A549 (cell line): ENCODE measurements at regions of chr11 and their contacts with region 1.

Region 1: GRCh38 chr11:62591448-62592145 is at the start of gene TUT1:
- DNase-seq: peak; percentile 96 to 100
- ATAC-seq: peak; percentile 89 to 95
- H3K4me3 ChIP-seq: peak within 1 kb of the TSS; percentile 79
- H3K27ac ChIP-seq: peak within 1 kb of the TSS; percentile 90 to 91
- H3K4me1 ChIP-seq: peaks cover 49% of the 10 kb centered on the region
- CTCF ChIP-seq: no peak
- EP300 ChIP-seq: no peak
- POLR2A ChIP-seq: peak; percentile 87
- RAD21 ChIP-seq: no peak; a peak in 1 of 5 replicates
- polyA plus RNA-seq, gene TUT1: 12.9 and 15.5 TPM in 2 replicates

Region 2: GRCh38 chr11:62573592-62574362 is 17.8 kb before region 1 on chr11 and contains the start of gene EEF1G:
- CTCF ChIA-PET with region 1: interaction called, 10 read pairs
- POLR2A ChIA-PET with region 1: interaction called, 93 read pairs
- DNase-seq: peak; percentile 99 to 100
- ATAC-seq: peak; percentile 91 to 96
- H3K4me3 ChIP-seq: peak within 1 kb of the TSS; percentile 97
- H3K27ac ChIP-seq: peak within 1 kb of the TSS; percentile 93 to 94
- H3K4me1 ChIP-seq: peaks cover 41% of the 10 kb centered on the region
- CTCF ChIP-seq: no peak
- EP300 ChIP-seq: no peak
- POLR2A ChIP-seq: peak; percentile 86
- RAD21 ChIP-seq: no peak
- polyA plus RNA-seq, gene EEF1G: 1,728 and 1,795 TPM in 2 replicates

Region 3: DNA sequence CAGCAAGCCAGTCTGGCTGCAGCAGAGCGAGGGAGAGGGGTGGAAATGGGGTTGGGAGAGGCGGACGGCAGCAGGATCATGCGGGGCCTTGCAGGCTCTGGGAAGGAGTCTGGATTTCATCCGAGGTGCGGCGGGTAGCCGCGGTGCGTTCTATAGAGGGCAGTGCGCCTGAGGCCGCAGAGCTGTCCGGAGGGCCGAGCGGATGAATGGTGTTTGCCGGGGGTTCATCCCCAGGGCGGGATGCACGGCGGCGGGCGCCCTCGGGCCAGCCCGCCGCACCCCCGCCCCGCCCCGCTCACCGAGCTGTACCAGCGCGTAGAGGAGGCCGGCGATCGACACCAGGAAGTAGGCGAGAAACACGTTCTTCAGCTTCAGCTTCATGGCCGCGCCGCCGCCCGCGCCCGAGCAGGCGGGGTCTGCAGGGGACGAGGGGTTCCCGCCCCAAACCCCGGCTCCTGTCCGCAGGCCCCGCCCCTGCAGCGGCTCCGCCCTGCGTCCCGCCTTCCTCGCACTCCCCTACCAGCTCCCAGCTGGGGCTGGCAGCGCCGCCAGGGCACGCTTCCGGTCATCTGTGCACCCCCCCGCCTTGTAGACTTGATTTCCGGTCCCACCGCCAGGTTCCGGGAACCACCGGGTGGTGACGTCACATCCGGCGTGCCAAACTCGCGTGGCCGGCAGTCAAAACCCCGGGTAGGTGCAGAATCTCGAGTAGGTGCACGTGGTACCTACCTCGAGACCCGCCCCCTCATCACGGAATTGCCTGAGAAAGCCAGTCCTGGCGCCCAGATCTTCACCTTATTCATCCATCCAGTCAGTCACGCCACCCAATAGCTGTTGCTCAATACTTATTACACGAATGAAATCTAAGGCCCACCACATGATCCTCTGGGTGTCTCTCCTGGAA is 30.2 kb after region 1 on chr11 and contains the start of gene B3GAT3:
- CTCF ChIA-PET with region 1: interaction called, 32 read pairs
- POLR2A ChIA-PET with region 1: interaction called, 48 read pairs
- DNase-seq: peak; percentile 99
- ATAC-seq: peak; percentile 96 to 97
- H3K4me3 ChIP-seq: peak within 1 kb of the TSS; percentile 77
- H3K27ac ChIP-seq: peak within 1 kb of the TSS; percentile 92
- H3K4me1 ChIP-seq: peaks cover 15% of the 10 kb centered on the region
- CTCF ChIP-seq: 0 out of 3 replicates have a peak, but pooled peaks have one; percentile 6
- EP300 ChIP-seq: no peak
- POLR2A ChIP-seq: peak; percentile 80
- RAD21 ChIP-seq: no peak
- polyA plus RNA-seq, gene B3GAT3: 19.0 and 20.5 TPM in 2 replicates

Region 4: DNA sequence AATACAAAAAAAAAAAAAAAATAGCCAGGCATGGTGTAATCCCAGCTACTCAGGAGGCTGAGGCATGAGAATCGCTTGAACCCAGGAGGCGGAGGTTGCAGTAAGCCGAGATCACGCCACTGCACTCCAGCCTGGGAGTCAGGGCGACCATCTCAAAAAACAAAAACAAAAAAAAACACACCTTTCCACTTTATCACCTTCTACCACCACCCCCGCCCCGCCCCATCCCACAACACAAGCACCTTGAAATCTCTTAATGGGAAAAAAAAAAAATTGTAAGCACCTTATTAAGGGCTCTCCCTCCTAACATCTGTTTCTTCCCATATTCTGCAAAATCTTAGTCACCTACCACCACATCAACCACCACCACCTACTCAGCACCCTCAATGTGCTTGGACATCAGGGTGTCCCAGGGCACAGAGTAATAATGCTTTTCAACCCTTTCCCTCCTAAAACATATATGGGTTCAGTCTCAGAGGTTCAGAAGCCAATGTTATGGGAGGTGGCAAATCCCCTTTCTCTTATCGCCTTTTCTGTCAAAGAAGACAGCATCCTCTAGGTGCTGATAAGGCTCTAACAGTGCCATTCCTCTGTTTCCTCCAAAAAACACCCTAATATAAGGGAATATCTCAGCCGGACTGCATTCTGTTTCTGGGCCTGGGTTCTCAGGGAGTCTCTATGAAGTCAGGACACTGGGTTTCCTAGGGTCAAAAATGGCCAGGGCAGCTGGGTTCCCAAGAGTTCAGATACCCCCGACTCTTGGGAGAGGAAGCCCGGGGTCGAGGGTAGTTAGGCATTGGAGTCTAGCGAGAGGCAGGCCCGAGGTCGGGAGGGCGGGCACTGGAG is 60.8 kb after region 1 on chr11:
- CTCF ChIA-PET with region 1: interaction called, 3 read pairs
- POLR2A ChIA-PET with region 1: interaction called, 18 read pairs
- DNase-seq: no peak
- ATAC-seq: peak in 1 of 2 experiments; percentile 60; a peak in 3 of 6 replicates
- H3K4me3 ChIP-seq: peak overlapping the region; percentile 75
- H3K27ac ChIP-seq: peak overlapping the region; percentile 85 to 97
- H3K4me1 ChIP-seq: peaks cover 10% of the 10 kb centered on the region; the same call in 2 of the 3 replicates
- CTCF ChIP-seq: no peak
- EP300 ChIP-seq: no peak
- POLR2A ChIP-seq: no peak
- RAD21 ChIP-seq: no peak

Region 5: GRCh38 chr11:62687508-62688396 is 96.2 kb after region 1 on chr11:
- CTCF ChIA-PET with region 1: no interaction called
- POLR2A ChIA-PET with region 1: no interaction called
- DNase-seq: no peak
- ATAC-seq: peak in 1 of 2 experiments; percentile 16; a peak in 3 of 6 replicates
- H3K4me3 ChIP-seq: no peak overlapping the region
- H3K27ac ChIP-seq: no peak overlapping the region
- H3K4me1 ChIP-seq: peaks cover 4% of the 10 kb centered on the region; the same call in 1 of the 3 replicates
- CTCF ChIP-seq: no peak
- EP300 ChIP-seq: no peak
- POLR2A ChIP-seq: no peak
- RAD21 ChIP-seq: no peak

Region 6: DNA sequence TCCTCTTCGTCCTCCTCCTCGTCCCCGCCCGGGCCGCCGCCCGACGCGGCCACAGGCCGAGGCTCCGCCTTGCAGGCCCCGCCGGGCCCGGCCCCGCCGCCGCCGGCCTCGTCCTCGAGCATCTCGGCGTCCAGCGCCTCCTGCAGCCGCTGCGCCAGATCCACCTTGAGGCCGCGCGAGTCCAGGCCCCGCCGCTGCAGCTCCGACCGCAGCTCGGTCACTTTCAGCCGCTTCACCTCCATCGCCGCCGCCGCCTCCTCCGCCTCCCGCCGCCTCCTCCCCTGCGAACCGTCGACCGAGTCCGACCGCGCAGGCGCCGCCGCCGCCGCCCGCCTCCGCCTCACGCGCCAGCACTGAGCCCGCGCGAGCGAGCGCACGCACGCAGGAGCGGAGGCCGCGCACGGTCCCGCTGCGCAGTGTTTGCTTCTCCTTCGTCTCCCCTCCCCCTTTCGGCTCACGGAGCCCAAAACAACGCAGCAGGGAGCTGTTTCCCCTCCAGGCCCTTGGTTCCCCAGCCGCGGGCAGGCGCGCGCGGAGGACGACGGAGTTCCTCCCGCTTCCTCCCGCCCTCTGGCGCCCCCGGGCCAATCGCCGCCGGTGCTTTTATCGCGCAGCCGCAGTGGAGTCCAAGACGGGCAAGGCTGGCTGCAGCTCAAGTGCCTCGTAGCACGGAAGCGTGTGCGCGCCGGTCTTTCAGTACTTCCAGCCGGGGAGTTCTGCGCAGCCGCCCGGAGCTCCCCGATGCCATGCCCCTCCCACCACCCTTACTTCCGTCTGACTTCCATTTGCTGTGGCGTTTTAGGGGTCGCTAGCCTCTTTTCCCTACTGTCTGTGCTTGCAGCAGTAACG is 135.5 kb after region 1 on chr11 and contains the start of gene HNRNPUL2:
- CTCF ChIA-PET with region 1: no interaction called
- POLR2A ChIA-PET with region 1: interaction called, 12 read pairs
- DNase-seq: peak; percentile 97 to 100
- ATAC-seq: peak; percentile 88 to 91
- H3K4me3 ChIP-seq: peak within 1 kb of the TSS; percentile 78
- H3K27ac ChIP-seq: peak within 1 kb of the TSS; percentile 97
- H3K4me1 ChIP-seq: peaks cover 21% of the 10 kb centered on the region
- CTCF ChIP-seq: no peak
- EP300 ChIP-seq: no peak
- POLR2A ChIP-seq: peak; percentile 77
- RAD21 ChIP-seq: no peak
- polyA plus RNA-seq, gene HNRNPUL2: 31.4 and 31.6 TPM in 2 replicates